Activated T-helper 2 cell treated with anti-CD3 and anti-CD28 coated beads, Interferon-gamma antibody, Interleukin-2, Interleukin-4, amounts not matched to agents 10 μg/mL and 5 μg/mL and 100 μg/mL, durations not matched to agents 14 hours and 24 hours and 36 hours (primary cell): ENCODE measurements at regions of chr21 and their contacts with region 1.

Region 1: DNA sequence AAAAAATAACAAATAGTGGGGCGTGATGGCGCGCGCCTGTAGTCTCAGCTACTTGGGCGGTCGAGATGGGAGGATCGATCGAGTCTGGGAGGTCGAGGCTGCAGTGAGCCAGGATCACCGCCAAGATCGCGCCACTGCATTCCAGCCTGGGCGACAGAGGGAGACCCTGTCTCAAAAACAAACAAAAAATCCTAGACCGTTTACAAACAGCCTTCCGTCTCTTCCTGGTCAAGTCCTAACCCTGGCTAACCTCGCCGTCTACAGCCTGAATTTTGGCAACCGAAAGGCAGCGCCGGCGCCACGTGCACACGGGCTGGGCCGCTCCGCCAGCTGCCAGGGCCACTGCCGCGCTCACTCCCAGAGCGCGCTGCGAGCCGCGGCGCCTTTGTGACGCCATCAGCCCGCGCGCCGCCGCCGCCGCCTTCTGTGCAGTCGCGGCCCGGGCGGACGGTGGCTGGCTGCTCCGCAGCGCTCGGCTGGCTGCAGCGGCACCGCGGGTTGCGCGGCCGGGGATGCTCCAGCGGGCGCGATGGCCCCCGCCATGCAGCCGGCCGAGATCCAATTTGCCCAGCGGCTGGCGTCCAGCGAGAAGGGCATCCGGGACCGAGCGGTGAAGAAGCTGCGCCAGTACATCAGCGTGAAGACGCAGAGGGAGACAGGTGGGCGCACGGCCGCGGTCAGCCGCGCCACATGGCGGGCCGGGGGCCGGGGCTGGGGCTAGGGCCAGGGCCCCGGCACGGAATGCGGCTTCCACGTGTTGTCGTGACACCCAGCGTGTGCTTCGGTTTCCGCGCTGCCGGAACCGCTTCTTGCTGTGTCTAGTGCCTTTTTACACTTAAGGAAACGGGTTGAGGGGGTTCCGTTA is at the starts of genes HSF2BP and RRP1B:
- DNase-seq: peak; percentile 78
- H3K4me3 Mint-ChIP-seq: peak within 1 kb of the TSS; percentile 96
- H3K27ac Mint-ChIP-seq: peak within 1 kb of the TSS; percentile 90
- H3K4me1 Mint-ChIP-seq: peaks cover 42% of the 10 kb centered on the region
- H3K27me3 Mint-ChIP-seq: no peaks in the 10 kb centered on the region
- total RNA-seq, gene HSF2BP: 0.97 and 1.1 TPM in 2 replicates
- total RNA-seq, gene RRP1B: 63.5 and 66.2 TPM in 2 replicates

Region 2: GRCh38 chr21:42973991-42974831 is 685.2 kb before region 1 on chr21 and contains the start of gene PKNOX1:
- intact Hi-C with region 1: loop called (anchors 10 kb)
- DNase-seq: peak; percentile 98
- H3K4me3 Mint-ChIP-seq: peak within 1 kb of the TSS; percentile 87
- H3K27ac Mint-ChIP-seq: peak within 1 kb of the TSS; percentile 90
- H3K4me1 Mint-ChIP-seq: peaks cover 25% of the 10 kb centered on the region
- H3K27me3 Mint-ChIP-seq: no peaks in the 10 kb centered on the region
- total RNA-seq, gene PKNOX1: 25.6 and 26.9 TPM in 2 replicates

Region 3: DNA sequence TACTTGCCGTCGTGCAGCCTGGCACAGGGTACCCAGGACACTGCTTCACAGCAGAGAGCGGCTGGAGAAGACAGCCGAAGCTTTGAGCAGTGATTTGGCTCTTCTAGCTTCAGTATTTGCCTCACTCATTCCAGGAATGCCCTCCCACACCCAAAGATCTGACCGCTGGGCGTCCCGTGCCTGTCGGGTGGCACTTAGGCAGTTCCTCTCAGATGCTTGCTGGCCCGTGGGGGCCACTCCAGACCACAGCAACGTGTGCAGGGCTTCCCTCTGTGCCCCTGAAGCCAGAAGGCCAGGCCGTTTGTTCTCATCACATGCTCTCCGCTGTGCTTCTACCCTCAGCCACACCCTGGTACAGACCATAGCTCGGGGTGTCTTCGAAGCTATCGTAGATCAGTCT is 17.0 kb after region 1 on chr21:
- intact Hi-C with region 1: no loop called
- DNase-seq: no peak
- H3K4me3 Mint-ChIP-seq: no peak overlapping the region
- H3K27ac Mint-ChIP-seq: no peak overlapping the region
- H3K4me1 Mint-ChIP-seq: no peaks in the 10 kb centered on the region
- H3K27me3 Mint-ChIP-seq: no peaks in the 10 kb centered on the region

Region 4: DNA sequence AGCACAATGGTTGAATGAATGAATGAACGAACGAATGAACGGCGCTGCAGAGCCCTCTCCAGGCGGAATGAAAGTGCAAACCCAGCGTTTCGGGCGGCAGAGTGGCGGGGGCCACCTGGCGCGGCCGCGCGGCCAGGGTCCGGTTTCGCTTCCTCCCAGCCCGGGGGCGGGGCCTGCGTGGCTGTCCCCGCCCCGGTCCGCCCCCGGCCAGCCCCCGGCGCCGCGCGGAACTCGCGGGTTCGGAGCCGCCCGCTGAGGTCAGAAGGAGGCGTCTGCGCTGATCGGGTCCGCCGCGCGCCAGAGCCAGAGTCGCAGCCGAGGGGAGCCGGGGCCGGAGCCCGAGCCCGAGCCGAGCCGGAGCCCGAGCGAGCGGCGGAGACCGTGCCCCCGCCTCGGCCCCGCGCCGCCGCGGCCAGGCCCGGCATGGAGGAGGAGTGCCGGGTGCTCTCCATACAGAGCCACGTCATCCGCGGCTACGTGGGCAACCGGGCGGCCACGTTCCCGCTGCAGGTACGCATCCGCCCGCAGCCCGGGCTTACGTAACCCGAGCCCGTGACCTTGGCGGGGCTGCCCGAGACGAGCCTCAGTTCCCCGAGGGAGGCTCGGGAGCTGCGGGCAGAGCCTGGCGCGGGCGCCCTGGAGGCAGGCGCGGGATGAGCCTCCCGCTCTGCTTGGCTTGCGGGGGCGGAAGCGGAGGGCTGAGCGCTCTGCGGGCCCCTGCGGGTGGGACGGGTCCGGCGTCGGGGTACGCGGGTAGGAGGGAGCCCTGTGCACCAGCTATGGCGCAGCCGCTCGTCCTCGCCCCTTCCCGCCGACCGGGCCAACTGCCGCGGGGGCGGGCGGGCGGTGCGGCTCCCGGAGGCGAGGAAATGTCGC is 59.7 kb after region 1 on chr21 and contains the start of gene PDXK:
- intact Hi-C with region 1: loop called (anchors 5 kb)
- DNase-seq: peak; percentile 80
- H3K4me3 Mint-ChIP-seq: peak within 1 kb of the TSS; percentile 88
- H3K27ac Mint-ChIP-seq: peak within 1 kb of the TSS; percentile 74
- H3K4me1 Mint-ChIP-seq: peaks cover 18% of the 10 kb centered on the region
- H3K27me3 Mint-ChIP-seq: peaks cover 8% of the 10 kb centered on the region
- total RNA-seq, gene PDXK: 124 and 136 TPM in 2 replicates

Region 5: DNA sequence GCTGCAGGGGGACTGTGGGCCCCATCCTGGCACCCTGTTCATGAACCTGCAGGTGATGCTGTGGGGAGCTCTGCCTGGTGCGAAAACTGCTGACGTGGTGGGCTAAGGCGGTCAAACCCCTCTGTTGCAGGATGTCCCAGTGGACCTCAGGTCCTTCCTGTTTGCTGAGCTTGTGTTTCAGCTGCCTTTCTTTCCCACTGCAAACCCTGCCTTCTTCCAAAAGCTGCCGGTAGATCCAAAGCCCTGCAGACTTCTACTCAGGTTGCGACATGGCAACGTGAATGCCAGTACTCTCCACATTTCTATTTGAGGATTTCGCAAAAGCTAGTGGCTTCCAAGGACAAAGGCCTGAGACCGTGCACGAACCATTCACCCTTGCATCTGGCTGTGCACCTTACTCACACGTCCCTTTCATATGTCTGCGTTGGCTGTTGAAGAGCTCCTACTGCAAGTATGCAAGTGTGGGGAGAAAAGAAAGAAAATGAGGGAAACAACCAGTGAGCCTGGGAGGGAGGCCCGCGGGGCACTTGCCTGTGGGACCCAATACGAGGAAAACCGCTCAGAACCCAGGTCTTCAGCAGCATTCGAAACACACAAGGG is 123.8 kb after region 1 on chr21:
- intact Hi-C with region 1: loop called (anchors 5 kb)
- DNase-seq: no peak
- H3K4me3 Mint-ChIP-seq: no peak overlapping the region
- H3K27ac Mint-ChIP-seq: peak overlapping the region; percentile 72
- H3K4me1 Mint-ChIP-seq: peaks cover 44% of the 10 kb centered on the region
- H3K27me3 Mint-ChIP-seq: no peaks in the 10 kb centered on the region